Ascending aorta (tissue), 2 donors: ENCODE measurements at regions of chr2 and their contacts with region 1.

Region 1: GRCh38 chr2:107412209-107412904 is 414.3 kb upstream of the RGPD4 start:
- DNase-seq: peak in 1 of 2 donors; percentile 81
- H3K4me3 ChIP-seq: peak overlapping the region in 1 of 2 donors; percentile 17
- H3K27ac ChIP-seq: peak overlapping the region; percentile 69 to 75
- H3K4me1 ChIP-seq: peaks cover 0 to 12% of the 10 kb centered on the region in 2 donors
- H3K27me3 ChIP-seq: no peaks in the 10 kb centered on the region
- CTCF ChIP-seq: no peak

Region 2: GRCh38 chr2:106800976-106801655 is 611.2 kb before region 1 on chr2:
- intact Hi-C with region 1: loop called (anchors 10 kb)
- DNase-seq: no peak
- H3K4me3 ChIP-seq: no peak overlapping the region
- H3K27ac ChIP-seq: peak overlapping the region in 1 of 2 donors; percentile 59
- H3K4me1 ChIP-seq: peaks cover 0 to 11% of the 10 kb centered on the region in 2 donors
- H3K27me3 ChIP-seq: no peaks in the 10 kb centered on the region
- CTCF ChIP-seq: no peak

Region 3: GRCh38 chr2:106868275-106868674 is 544.1 kb before region 1 on chr2:
- intact Hi-C with region 1: loop called (anchors 5 kb)
- DNase-seq: no peak
- H3K4me3 ChIP-seq: peak overlapping the region; percentile 32 to 51
- H3K27ac ChIP-seq: peak overlapping the region; percentile 80 to 84
- H3K4me1 ChIP-seq: peaks cover 3 to 22% of the 10 kb centered on the region in 2 donors
- H3K27me3 ChIP-seq: no peaks in the 10 kb centered on the region
- CTCF ChIP-seq: peak; percentile 4 to 46 (median 36)

Region 4: DNA sequence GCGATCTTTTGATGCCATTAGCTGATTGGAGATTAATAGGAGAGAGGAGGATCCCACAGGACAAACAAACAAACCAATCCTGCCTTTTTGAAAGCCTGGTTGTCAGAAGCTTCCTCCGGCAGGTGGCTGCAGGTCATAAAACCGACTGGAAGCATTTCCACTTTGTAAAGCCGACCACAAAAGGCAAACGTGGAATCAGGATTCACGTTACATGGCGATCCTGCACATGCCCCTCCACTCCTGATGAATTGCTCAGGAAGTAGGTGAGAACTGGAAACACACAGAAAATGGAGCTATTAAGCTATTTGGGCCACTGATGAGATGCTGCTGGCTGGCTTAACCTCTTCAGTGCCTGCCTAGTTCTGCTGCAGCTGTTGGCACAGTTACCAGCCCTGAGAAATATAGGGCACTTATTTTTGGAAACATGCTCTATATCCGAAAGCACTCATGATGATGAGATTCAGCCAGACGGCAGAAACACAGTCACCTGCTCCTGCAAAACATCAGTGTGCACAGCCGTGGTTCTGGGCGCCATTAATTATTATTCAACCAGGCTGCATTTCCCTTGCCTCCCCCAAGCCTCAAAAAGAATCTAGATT is 416.1 kb before region 1 on chr2:
- intact Hi-C with region 1: loop called (anchors 5 kb)
- DNase-seq: no peak
- H3K4me3 ChIP-seq: peak overlapping the region in 1 of 2 donors; percentile 53
- H3K27ac ChIP-seq: peak overlapping the region in 1 of 2 donors; percentile 68
- H3K4me1 ChIP-seq: peaks cover 6 to 16% of the 10 kb centered on the region in 2 donors
- H3K27me3 ChIP-seq: no peaks in the 10 kb centered on the region
- CTCF ChIP-seq: no peak

Region 5: GRCh38 chr2:107174171-107174570 is 238.2 kb before region 1 on chr2:
- intact Hi-C with region 1: no loop called
- DNase-seq: no peak
- H3K4me3 ChIP-seq: no peak overlapping the region
- H3K27ac ChIP-seq: no peak overlapping the region
- H3K4me1 ChIP-seq: no peaks in the 10 kb centered on the region
- H3K27me3 ChIP-seq: no peaks in the 10 kb centered on the region
- CTCF ChIP-seq: no peak

Region 6: GRCh38 chr2:107313316-107313715 is 99.0 kb before region 1 on chr2:
- intact Hi-C with region 1: loop called (anchors 5 kb)
- DNase-seq: no peak
- H3K4me3 ChIP-seq: no peak overlapping the region
- H3K27ac ChIP-seq: no peak overlapping the region
- H3K4me1 ChIP-seq: peaks cover 0 to 6% of the 10 kb centered on the region in 2 donors
- H3K27me3 ChIP-seq: no peaks in the 10 kb centered on the region
- CTCF ChIP-seq: no peak

Region 7: GRCh38 chr2:107325981-107326786 is 86.2 kb before region 1 on chr2:
- intact Hi-C with region 1: loop called (anchors 5 kb)
- DNase-seq: peak in 1 of 2 donors; percentile 68
- H3K4me3 ChIP-seq: no peak overlapping the region
- H3K27ac ChIP-seq: peak overlapping the region; percentile 79 to 80
- H3K4me1 ChIP-seq: peaks cover 0 to 15% of the 10 kb centered on the region in 2 donors
- H3K27me3 ChIP-seq: no peaks in the 10 kb centered on the region
- CTCF ChIP-seq: no peak

Region 8: DNA sequence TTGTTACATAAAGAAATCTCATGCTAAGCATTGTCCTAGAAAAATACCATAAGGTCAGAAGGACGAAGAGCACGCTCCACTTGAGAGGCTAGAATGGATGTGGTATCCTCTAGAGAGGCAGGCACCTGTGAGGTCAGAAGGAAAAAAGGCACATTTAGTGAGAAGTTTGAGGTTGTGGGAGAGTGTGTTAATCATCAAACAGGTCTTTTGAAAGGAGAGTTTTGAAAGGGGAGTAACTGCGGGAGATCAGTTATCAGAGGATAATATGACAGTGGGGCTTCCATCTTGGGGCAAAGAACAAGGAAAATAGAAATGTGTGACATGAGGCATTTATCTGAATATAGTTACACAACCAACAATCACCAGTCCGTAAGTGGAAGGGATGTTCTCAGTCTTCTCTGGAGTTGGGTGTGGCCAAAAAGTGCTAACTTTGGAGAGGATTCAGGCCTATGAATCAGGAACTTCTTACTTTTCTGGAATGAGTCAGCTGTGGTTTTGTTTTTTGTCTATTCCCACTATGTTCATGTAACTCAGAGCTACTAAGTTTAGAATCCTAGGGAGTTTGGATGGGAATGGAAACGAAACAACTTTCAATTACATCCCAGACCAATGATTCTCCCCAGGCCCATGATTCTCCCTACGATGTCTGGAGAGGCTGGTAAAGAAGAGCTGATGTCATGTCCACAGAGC is 75.0 kb before region 1 on chr2:
- intact Hi-C with region 1: loop called (anchors 1 kb)
- DNase-seq: peak in 1 of 2 donors; percentile 68
- H3K4me3 ChIP-seq: no peak overlapping the region
- H3K27ac ChIP-seq: peak overlapping the region; percentile 77
- H3K4me1 ChIP-seq: peaks cover 0 to 15% of the 10 kb centered on the region in 2 donors
- H3K27me3 ChIP-seq: no peaks in the 10 kb centered on the region
- CTCF ChIP-seq: no peak

Region 9: GRCh38 chr2:107775791-107776190 is 363.4 kb after region 1 on chr2:
- intact Hi-C with region 1: no loop called
- DNase-seq: no peak
- H3K4me3 ChIP-seq: no peak overlapping the region
- H3K27ac ChIP-seq: no peak overlapping the region
- H3K4me1 ChIP-seq: no peaks in the 10 kb centered on the region
- H3K27me3 ChIP-seq: no peaks in the 10 kb centered on the region
- CTCF ChIP-seq: no peak

Region 10: GRCh38 chr2:108315444-108315934 is 903.1 kb after region 1 on chr2:
- intact Hi-C with region 1: no loop called
- DNase-seq: no peak
- H3K4me3 ChIP-seq: no peak overlapping the region
- H3K27ac ChIP-seq: no peak overlapping the region
- H3K4me1 ChIP-seq: no peaks in the 10 kb centered on the region
- H3K27me3 ChIP-seq: no peaks in the 10 kb centered on the region
- CTCF ChIP-seq: no peak